HepG2 (cell line): ENCODE measurements at regions of chr20 and their contacts with region 1.

Region 1: GRCh38 chr20:47785854-47786764 is 828 bp upstream of the SULF2 start:
- DNase-seq: peak; percentile 82
- ATAC-seq: peak; percentile 82
- H3K4me3 ChIP-seq: peak overlapping the region; percentile 53 to 76 (median 72)
- H3K27ac ChIP-seq: no peak overlapping the region
- H3K4me1 ChIP-seq: peaks cover 42% of the 10 kb centered on the region
- H3K27me3 ChIP-seq: peaks cover 6 to 52% of the 10 kb centered on the region in 2 experiments; a peak in 4 of 5 replicates
- CTCF ChIP-seq: peak; percentile 95
- EP300 ChIP-seq: no peak
- POLR2A ChIP-seq: no peak
- RAD21 ChIP-seq: peak; percentile 94

Region 2: GRCh38 chr20:47677635-47678453 is 108.3 kb before region 1 on chr20:
- CTCF ChIA-PET with region 1: interaction called, 4 read pairs
- POLR2A ChIA-PET with region 1: no interaction called
- in situ Hi-C with region 1: loop called (anchors 5 kb)
- intact Hi-C with region 1: loop called (anchors 1 kb)
- DNase-seq: peak; percentile 69
- ATAC-seq: peak; percentile 64
- H3K4me3 ChIP-seq: no peak overlapping the region
- H3K27ac ChIP-seq: no peak overlapping the region
- H3K4me1 ChIP-seq: peaks cover 40% of the 10 kb centered on the region
- H3K27me3 ChIP-seq: no peaks in the 10 kb centered on the region
- CTCF ChIP-seq: peak; percentile 100
- EP300 ChIP-seq: no peak
- POLR2A ChIP-seq: no peak
- RAD21 ChIP-seq: peak; percentile 99

Region 3: GRCh38 chr20:47725248-47725973 is 60.7 kb before region 1 on chr20:
- CTCF ChIA-PET with region 1: no interaction called
- POLR2A ChIA-PET with region 1: interaction called, 4 read pairs
- in situ Hi-C with region 1: no loop called
- intact Hi-C with region 1: loop called (anchors 1 kb)
- DNase-seq: peak; percentile 98
- ATAC-seq: peak; percentile 95
- H3K4me3 ChIP-seq: no peak overlapping the region
- H3K27ac ChIP-seq: no peak overlapping the region
- H3K4me1 ChIP-seq: peaks cover 23% of the 10 kb centered on the region
- H3K27me3 ChIP-seq: no peaks in the 10 kb centered on the region
- CTCF ChIP-seq: peak; percentile 98
- EP300 ChIP-seq: peak in 1 of 2 experiments; percentile 29; a peak in 2 of 4 replicates
- POLR2A ChIP-seq: no peak
- RAD21 ChIP-seq: peak; percentile 94

Region 4: DNA sequence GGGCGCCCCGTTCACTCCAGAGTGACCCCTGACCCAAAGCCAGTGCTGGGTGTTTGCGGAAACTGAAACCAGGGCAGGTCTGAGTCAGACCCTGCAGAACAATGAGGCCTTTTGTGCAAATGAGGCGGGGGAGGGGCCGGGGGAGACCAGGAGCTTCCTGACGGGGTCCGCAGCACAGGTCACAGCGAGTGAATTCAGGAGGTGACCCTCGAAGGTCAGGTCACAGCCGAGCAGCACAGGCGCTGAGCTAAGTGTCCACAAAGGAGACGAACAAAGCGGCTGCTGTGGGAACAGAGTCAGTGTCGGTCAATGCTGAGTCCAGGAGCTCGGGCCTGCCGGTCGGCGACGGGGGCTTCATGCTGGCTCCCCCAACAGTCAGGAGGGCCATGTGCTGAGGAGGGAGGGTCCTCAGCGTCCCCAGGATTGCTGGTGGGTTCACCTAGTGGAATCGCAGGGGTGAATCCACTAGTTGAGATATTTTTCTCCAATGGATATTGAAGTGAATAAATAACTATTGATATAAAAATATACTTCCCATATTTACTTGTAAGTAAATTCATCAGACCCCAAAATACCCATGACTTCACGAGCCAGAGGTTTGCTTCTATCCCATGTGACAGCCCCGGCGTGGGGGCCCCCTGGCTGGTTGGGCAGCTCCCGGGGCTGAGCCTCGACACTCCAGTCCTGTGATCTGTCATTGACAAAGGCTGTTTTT is 187.6 kb after region 1 on chr20:
- CTCF ChIA-PET with region 1: no interaction called
- POLR2A ChIA-PET with region 1: no interaction called
- in situ Hi-C with region 1: no loop called
- intact Hi-C with region 1: loop called (anchors 5 kb)
- DNase-seq: peak; percentile 99
- ATAC-seq: peak; percentile 89
- H3K4me3 ChIP-seq: peak overlapping the region in 1 of 3 experiments; percentile 61; a peak in 2 of 6 replicates
- H3K27ac ChIP-seq: peak overlapping the region; percentile 97
- H3K4me1 ChIP-seq: peaks cover 91% of the 10 kb centered on the region
- H3K27me3 ChIP-seq: no peaks in the 10 kb centered on the region
- CTCF ChIP-seq: peak; percentile 14; the same call in 1 of the 2 replicates
- EP300 ChIP-seq: peak; percentile 92 to 93
- POLR2A ChIP-seq: peak; percentile 58 to 59
- RAD21 ChIP-seq: peak; percentile 59; the same call in 1 of the 2 replicates

Region 5: DNA sequence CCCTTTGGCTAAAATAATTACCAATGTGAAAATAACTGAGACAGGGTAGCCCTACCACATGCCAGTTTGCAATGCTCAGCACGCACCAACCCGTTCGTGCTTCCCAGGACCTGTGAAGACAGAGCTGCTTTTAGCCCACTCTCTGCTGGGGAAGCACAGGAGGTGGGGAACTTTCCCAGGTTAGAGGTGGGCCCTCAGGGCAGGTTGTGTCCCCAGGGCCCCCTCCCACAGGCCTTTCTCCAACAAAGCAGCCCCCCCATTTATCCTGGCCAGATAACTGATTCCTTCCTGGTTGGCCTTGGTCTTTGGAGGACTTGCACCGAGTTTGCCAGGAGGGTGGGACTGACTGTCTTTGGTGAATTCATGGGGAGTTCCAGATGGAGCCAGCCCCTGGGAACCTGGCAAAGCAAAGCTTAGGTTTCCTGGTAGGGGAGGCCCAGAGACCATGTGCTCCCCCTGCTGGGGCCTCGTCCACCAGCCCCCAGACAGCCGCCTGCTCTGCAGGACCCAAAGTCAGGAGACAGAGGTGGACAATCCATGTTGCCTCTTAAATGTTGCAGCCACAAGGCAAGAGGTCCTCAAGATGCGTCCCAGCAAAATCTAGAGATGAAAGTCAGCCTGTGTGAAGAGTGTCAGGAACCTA is 543.6 kb after region 1 on chr20:
- CTCF ChIA-PET with region 1: no interaction called
- POLR2A ChIA-PET with region 1: no interaction called
- in situ Hi-C with region 1: no loop called
- intact Hi-C with region 1: loop called (anchors 1 kb)
- DNase-seq: peak; percentile 32
- ATAC-seq: peak; percentile 84
- H3K4me3 ChIP-seq: no peak overlapping the region
- H3K27ac ChIP-seq: no peak overlapping the region
- H3K4me1 ChIP-seq: peaks cover 5% of the 10 kb centered on the region; the same call in 1 of the 2 replicates
- H3K27me3 ChIP-seq: peaks cover 1 to 23% of the 10 kb centered on the region in 2 experiments; a peak in 4 of 5 replicates
- CTCF ChIP-seq: peak; percentile 80
- EP300 ChIP-seq: no peak
- POLR2A ChIP-seq: no peak
- RAD21 ChIP-seq: peak; percentile 87